ENCODE measurements at regions of chr2 and their contacts with region 1.

Region 1: DNA sequence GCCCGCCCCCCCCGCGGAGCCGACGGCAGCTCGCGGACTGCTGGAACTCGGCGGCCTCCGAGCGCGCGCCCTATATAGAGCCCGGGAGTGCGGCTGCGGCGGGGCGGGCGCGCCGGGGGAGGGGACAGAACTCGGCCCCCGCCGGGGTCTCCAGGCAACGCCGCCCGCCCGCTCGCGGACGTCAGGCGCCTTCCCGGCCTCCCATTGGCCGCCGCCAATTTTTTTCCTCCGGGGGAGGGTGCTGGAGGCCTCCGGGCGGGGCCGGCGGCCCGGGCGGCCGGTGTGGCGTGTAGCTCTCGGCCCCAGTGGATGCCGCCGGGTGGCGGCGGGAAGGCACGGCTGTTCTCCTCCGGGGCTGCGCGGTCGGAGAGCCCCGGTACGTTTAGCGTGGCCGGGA is at the start of gene ZFP36L2:
- DNase-seq: peak; percentile 97 to 99
- H3K4me3 ChIP-seq: peak within 1 kb of the TSS; percentile 98
- H3K4me3 Mint-ChIP-seq: peak within 1 kb of the TSS; percentile 70
- H3K27ac Mint-ChIP-seq: peak within 1 kb of the TSS; percentile 97
- H3K4me1 ChIP-seq: peaks cover 46% of the 10 kb centered on the region
- H3K4me1 Mint-ChIP-seq: peaks cover 24% of the 10 kb centered on the region
- H3K27me3 ChIP-seq: no peaks in the 10 kb centered on the region
- H3K27me3 Mint-ChIP-seq: no peaks in the 10 kb centered on the region
- CTCF ChIP-seq: peak in 1 of 2 experiments; percentile 10
- total RNA-seq, gene ZFP36L2: 225 and 237 TPM in 2 replicates

Region 2: GRCh38 chr2:42810121-42810970 is 416.2 kb before region 1 on chr2:
- CTCF ChIA-PET with region 1: interaction called, 7 read pairs
- POLR2A ChIA-PET with region 1: interaction called, 3 read pairs
- intact Hi-C with region 1: loop called (anchors 5 kb)
- DNase-seq: peak; percentile 95 to 97
- H3K4me3 ChIP-seq: peak overlapping the region; percentile 80
- H3K4me3 Mint-ChIP-seq: peak overlapping the region; percentile 96
- H3K27ac Mint-ChIP-seq: peak overlapping the region; percentile 94
- H3K4me1 ChIP-seq: peaks cover 5% of the 10 kb centered on the region; the same call in 1 of the 2 replicates
- H3K4me1 Mint-ChIP-seq: peaks cover 14% of the 10 kb centered on the region
- H3K27me3 ChIP-seq: no peaks in the 10 kb centered on the region
- H3K27me3 Mint-ChIP-seq: no peaks in the 10 kb centered on the region
- CTCF ChIP-seq: peak in 1 of 2 experiments; percentile 3

Region 3: GRCh38 chr2:42944779-42945415 is 281.7 kb before region 1 on chr2:
- CTCF ChIA-PET with region 1: interaction called, 6 read pairs
- POLR2A ChIA-PET with region 1: interaction called, 4 read pairs
- intact Hi-C with region 1: loop called (anchors 1 kb)
- DNase-seq: no peak
- H3K4me3 ChIP-seq: no peak overlapping the region
- H3K4me3 Mint-ChIP-seq: no peak overlapping the region
- H3K27ac Mint-ChIP-seq: no peak overlapping the region
- H3K4me1 ChIP-seq: peaks cover 52% of the 10 kb centered on the region
- H3K4me1 Mint-ChIP-seq: peaks cover 36% of the 10 kb centered on the region
- H3K27me3 ChIP-seq: no peaks in the 10 kb centered on the region
- H3K27me3 Mint-ChIP-seq: no peaks in the 10 kb centered on the region
- CTCF ChIP-seq: no peak

Region 4: DNA sequence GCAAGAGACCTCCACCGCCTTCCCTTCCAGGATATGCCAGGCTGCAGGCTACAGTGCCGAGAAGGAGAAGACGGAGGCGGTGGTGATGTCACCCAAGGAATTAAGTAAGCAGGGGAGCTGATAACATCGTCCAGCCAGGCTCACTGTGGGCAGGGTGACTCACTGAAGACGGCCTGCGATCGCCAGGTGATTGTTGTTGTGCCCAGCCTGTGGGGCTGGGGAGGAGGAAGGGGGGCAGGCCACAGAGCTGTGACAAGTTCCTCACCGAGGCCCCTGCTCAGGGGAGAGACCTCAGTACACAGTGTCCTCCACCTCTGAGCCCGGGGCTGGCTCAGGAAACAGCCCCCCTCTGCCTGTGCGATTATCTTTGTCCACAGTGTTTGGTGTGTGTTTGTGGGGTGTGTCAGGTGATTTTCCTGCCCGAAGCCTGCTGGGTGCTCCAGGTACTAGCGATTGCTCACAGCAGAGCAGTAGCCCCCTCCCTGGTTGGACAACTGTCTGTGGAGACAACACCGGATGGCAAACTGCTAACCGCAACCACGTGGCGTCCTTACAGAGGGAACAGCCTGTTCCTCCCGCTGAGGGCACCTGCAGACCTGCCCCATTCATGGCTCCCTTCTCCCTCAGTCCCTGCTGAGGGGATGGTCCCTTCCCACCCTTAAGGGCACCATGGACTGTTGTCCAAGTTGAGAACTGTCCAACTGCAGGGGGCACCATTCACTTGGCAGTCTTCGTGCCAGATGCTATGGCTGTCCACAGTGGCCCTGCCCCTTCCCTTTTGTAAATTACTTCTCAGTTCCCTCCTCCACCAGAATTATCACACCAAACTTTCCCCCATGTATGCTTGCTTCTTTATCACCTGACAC is 95.3 kb before region 1 on chr2:
- CTCF ChIA-PET with region 1: interaction called, 3 read pairs
- POLR2A ChIA-PET with region 1: no interaction called
- intact Hi-C with region 1: loop called (anchors 1 kb)
- DNase-seq: peak; percentile 59 to 65
- H3K4me3 ChIP-seq: no peak overlapping the region
- H3K4me3 Mint-ChIP-seq: no peak overlapping the region
- H3K27ac Mint-ChIP-seq: peak overlapping the region; percentile 51
- H3K4me1 ChIP-seq: peaks cover 50% of the 10 kb centered on the region
- H3K4me1 Mint-ChIP-seq: peaks cover 53% of the 10 kb centered on the region
- H3K27me3 ChIP-seq: no peaks in the 10 kb centered on the region
- H3K27me3 Mint-ChIP-seq: no peaks in the 10 kb centered on the region
- CTCF ChIP-seq: peak in 1 of 2 experiments; percentile 33

Region 5: DNA sequence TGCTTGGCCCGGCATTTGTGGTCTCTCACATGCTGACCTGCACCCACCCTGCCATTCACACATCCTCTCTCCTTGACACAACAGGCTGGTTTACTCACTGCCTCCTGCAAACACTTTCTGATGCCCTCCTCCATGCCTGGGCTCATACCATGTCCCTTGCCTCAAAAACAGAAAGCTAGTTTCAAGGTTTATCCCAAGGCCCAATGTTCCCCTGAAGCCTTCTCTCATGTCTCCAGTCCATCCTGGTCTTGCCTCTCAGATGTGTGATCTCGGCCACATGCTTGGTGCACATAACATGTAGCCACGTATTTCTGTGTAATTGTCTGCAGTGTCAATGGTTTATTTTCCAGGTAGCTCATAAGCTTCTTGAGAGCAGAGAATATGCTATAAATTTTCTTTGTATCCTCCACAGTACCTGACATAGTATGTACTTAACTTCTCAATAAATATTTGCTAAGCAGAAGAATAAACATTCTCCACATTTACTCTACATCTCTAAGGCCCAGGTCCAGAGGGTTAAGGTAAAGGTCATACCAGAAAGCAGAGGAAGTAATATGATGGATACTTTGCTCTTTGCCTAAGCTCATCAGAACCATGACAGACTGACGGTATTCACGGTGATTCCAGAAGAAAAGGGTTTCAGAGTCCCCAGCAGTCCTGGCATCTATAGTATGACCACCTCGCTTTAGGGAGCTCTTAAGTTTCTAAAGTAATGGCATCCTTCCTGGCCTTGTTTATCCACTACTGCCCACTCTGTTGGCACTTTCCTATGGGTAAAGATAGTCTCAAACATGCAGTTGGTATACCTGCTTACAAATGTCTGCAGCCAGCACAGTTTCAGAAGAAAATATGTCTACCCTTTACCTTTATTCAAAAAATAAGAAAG is 163.3 kb after region 1 on chr2:
- CTCF ChIA-PET with region 1: interaction called, 7 read pairs
- POLR2A ChIA-PET with region 1: interaction called, 10 read pairs
- intact Hi-C with region 1: no loop called
- DNase-seq: peak in 1 of 2 experiments; percentile 60
- H3K4me3 ChIP-seq: no peak overlapping the region
- H3K4me3 Mint-ChIP-seq: peak overlapping the region; percentile 50
- H3K27ac Mint-ChIP-seq: peak overlapping the region; percentile 61
- H3K4me1 ChIP-seq: peaks cover 48% of the 10 kb centered on the region
- H3K4me1 Mint-ChIP-seq: peaks cover 47% of the 10 kb centered on the region
- H3K27me3 ChIP-seq: no peaks in the 10 kb centered on the region
- H3K27me3 Mint-ChIP-seq: no peaks in the 10 kb centered on the region
- CTCF ChIP-seq: no peak

Region 6: GRCh38 chr2:43484323-43484930 is 257.9 kb after region 1 on chr2:
- CTCF ChIA-PET with region 1: interaction called, 8 read pairs
- POLR2A ChIA-PET with region 1: interaction called, 3 read pairs
- intact Hi-C with region 1: loop called (anchors 1 kb)
- DNase-seq: peak in 1 of 2 experiments; percentile 57
- H3K4me3 ChIP-seq: no peak overlapping the region
- H3K4me3 Mint-ChIP-seq: no peak overlapping the region
- H3K27ac Mint-ChIP-seq: no peak overlapping the region
- H3K4me1 ChIP-seq: peaks cover 14% of the 10 kb centered on the region
- H3K4me1 Mint-ChIP-seq: peaks cover 34% of the 10 kb centered on the region
- H3K27me3 ChIP-seq: no peaks in the 10 kb centered on the region
- H3K27me3 Mint-ChIP-seq: no peaks in the 10 kb centered on the region
- CTCF ChIP-seq: peak; percentile 28 to 80

Measured in Caco-2 (cell line).